ENCODE measurements at regions of chr2 and their contacts with region 1.

Region 1: DNA sequence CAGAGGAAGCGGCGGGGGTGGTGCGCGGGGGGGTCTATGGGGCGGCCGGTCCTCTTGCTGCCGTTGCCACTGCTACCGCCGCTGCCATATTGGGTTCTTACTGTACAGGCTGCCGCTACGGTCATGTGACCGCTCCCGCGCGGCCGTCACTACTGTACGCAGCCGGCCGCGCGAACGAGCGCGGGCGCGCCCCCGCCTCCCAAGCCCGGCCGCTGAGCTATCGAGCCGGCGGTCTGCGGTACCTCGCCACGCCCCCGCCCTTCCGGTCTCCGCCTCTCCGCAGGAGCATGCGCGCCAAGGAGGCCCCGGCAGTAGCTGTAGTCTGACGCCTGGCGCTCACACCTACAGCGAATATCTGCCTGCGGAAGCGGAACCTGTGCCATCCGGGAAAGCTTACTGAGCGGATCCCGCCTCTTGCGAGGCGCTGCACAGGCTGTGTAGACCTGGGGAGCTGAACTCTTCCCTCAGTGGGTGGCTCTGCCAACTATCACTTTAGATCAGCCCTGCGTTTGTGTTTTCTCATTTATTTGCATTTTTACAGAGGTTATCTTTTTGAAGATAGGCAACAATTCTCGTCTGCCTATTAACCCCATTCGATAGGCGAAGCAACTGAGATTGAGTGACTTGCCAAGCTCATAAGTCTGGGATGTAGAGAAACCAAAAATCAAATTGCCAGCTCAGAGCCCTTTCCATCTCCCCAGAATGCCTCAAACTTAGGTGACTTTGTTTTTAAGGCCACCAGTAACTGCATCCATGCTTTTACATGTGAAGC is at the start of gene ASXL2:
- DNase-seq: peak; percentile 97
- H3K4me3 Mint-ChIP-seq: peak within 1 kb of the TSS; percentile 91
- H3K27ac Mint-ChIP-seq: peak within 1 kb of the TSS; percentile 96
- H3K4me1 Mint-ChIP-seq: peaks cover 43% of the 10 kb centered on the region
- H3K27me3 Mint-ChIP-seq: no peaks in the 10 kb centered on the region
- total RNA-seq, gene ASXL2: 25.2 to 29.1 TPM

Region 2: DNA sequence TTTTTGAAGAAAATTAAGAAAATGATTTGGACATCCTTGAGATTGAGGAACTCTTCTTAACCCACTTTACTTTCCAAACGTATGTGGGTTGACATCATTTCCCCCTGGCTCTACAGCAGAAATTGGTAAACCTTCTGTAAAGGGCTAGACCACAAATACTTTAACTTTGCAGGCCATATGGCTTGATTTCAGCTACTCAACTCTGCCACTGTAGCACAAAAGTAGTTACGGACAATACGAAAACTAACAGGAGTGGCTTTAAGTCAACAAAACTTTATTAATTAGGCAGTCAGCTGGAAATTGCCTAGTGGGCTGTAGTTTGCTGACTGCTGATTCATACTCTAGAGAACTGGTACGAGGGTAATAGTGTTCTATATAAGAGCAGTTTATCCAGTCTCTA is 122.0 kb before region 1 on chr2:
- CTCF ChIA-PET with region 1: no interaction called
- intact Hi-C with region 1: loop called (anchors 1 kb)
- DNase-seq: no peak
- H3K4me3 Mint-ChIP-seq: no peak overlapping the region
- H3K27ac Mint-ChIP-seq: no peak overlapping the region
- H3K4me1 Mint-ChIP-seq: peaks cover 12% of the 10 kb centered on the region
- H3K27me3 Mint-ChIP-seq: no peaks in the 10 kb centered on the region

Region 3: GRCh38 chr2:25822190-25823117 is 56.1 kb before region 1 on chr2:
- CTCF ChIA-PET with region 1: no interaction called
- intact Hi-C with region 1: loop called (anchors 1 kb)
- DNase-seq: peak; percentile 83
- H3K4me3 Mint-ChIP-seq: peak overlapping the region; percentile 71
- H3K27ac Mint-ChIP-seq: peak overlapping the region; percentile 52
- H3K4me1 Mint-ChIP-seq: peaks cover 63% of the 10 kb centered on the region
- H3K27me3 Mint-ChIP-seq: no peaks in the 10 kb centered on the region

Region 4: GRCh38 chr2:26345545-26346453 is 467.3 kb after region 1 on chr2 and contains the start of gene SELENOI:
- CTCF ChIA-PET with region 1: no interaction called
- intact Hi-C with region 1: loop called (anchors 2 kb)
- DNase-seq: peak; percentile 99
- H3K4me3 Mint-ChIP-seq: peak within 1 kb of the TSS; percentile 90
- H3K27ac Mint-ChIP-seq: peak within 1 kb of the TSS; percentile 94
- H3K4me1 Mint-ChIP-seq: peaks cover 27% of the 10 kb centered on the region
- H3K27me3 Mint-ChIP-seq: no peaks in the 10 kb centered on the region
- total RNA-seq, gene SELENOI: 20.0 to 22.9 TPM

Measured in activated naive CD4-positive, alpha-beta T cell treated with anti-CD3 and anti-CD28 coated beads for 36 hours (primary cell).